Mucosa of descending colon (tissue), 3 donors: ENCODE measurements at regions of chr6 and their contacts with region 1.

Region 1: GRCh38 chr6:144411332-144412190 is 126.4 kb downstream of the UTRN start:
- DNase-seq: no peak
- ATAC-seq: peak; percentile 41
- H3K4me3 ChIP-seq: no peak overlapping the region
- H3K4me1 ChIP-seq: peaks cover 19% of the 10 kb centered on the region
- CTCF ChIP-seq: no peak

Region 2: DNA sequence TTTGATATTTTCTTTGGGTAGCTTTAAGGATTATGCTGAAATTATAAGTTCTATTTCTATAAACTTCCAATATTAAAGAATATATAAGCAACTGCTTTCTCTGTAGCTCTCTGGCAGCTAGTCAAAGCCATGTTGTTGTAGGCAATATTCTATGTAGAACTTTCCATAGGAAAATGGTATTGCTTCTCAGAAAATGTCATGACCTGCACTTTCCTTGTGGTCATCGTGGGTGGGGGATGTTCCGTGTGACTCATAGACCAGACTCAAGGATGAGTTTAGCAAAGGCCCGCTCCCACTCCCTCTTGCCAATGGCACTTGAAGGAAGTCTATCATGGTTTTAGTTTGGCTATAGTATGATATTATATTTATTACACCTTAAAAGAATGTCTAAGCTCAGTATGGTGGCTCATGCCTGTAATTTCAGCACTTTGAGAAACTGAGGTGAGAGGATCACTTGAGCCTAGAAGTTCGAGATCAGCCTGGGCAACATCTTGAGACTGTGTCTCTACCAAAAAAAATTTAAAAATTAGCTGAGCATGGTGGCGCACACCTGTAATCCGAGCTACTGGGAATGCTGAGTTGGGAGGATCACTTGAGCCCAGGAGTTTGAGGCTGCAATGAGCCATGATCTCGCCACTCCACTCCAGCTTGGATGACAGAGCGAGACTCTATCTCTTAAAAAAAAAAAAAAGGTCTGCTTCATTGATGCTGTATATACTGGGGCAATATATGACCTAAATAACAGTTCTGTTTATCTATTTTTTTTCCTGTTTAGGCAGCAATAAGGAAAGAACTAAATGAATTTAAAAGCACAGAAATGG is 605.1 kb before region 1 on chr6:
- intact Hi-C with region 1: no loop called
- DNase-seq: peak in 1 of 3 donors; percentile 11
- ATAC-seq: peak; percentile 44
- H3K4me3 ChIP-seq: no peak overlapping the region
- H3K4me1 ChIP-seq: no peaks in the 10 kb centered on the region
- CTCF ChIP-seq: no peak

Region 3: GRCh38 chr6:144211160-144211559 is 200.4 kb before region 1 on chr6:
- intact Hi-C with region 1: no loop called
- DNase-seq: no peak
- ATAC-seq: no peak
- H3K4me3 ChIP-seq: no peak overlapping the region
- H3K4me1 ChIP-seq: peaks cover 6% of the 10 kb centered on the region
- CTCF ChIP-seq: no peak

Region 4: GRCh38 chr6:144248476-144249301 is 162.9 kb before region 1 on chr6:
- intact Hi-C with region 1: no loop called
- DNase-seq: no peak
- ATAC-seq: no peak
- H3K4me3 ChIP-seq: no peak overlapping the region
- H3K4me1 ChIP-seq: no peaks in the 10 kb centered on the region
- CTCF ChIP-seq: no peak

Region 5: GRCh38 chr6:144296973-144297372 is 114.6 kb before region 1 on chr6:
- intact Hi-C with region 1: loop called in 1 of 2 experiments (anchors 5 kb)
- DNase-seq: no peak
- ATAC-seq: peak; percentile 40
- H3K4me3 ChIP-seq: no peak overlapping the region
- H3K4me1 ChIP-seq: peaks cover 14% of the 10 kb centered on the region
- CTCF ChIP-seq: no peak